CD4-positive, alpha-beta T cell (primary cell): ENCODE measurements at regions of chr2 and their contacts with region 1.

Region 1: GRCh38 chr2:85642725-85643124 is 25.3 kb downstream of the SFTPB start:
- DNase-seq: peak in 1 of 14 experiments; percentile 24
- ATAC-seq: no peak
- H3K4me3 ChIP-seq: no peak overlapping the region
- H3K4me3 Mint-ChIP-seq: no peak overlapping the region
- H3K27ac ChIP-seq: no peak overlapping the region
- H3K27ac Mint-ChIP-seq: peak overlapping the region; percentile 59
- H3K4me1 ChIP-seq: peaks cover 1% of the 10 kb centered on the region
- H3K4me1 Mint-ChIP-seq: peaks cover 6% of the 10 kb centered on the region
- H3K27me3 ChIP-seq: no peaks in the 10 kb centered on the region
- H3K27me3 Mint-ChIP-seq: no peaks in the 10 kb centered on the region
- CTCF ChIP-seq: no peak

Region 2: DNA sequence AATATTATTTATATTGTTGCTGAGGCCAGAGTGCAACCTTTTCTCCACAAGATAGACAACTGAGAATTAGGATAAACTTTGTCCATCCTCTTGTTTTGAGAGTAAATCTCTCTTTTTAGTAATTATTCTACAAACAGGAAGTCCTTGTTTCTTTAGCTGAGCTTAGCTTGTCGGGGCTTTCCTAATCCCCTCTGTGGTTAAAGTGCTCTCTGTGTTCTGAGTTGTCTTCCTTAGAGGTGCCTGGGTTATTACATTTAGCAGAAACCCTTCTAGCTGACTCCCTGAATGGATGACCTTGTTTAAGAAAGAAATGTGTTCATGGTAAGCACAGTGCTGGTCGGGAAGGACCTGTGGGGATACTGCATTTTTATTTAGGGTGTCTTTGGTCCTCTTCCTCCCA is 14.1 kb before region 1 on chr2:
- CTCF ChIA-PET with region 1: interaction called, 18 read pairs
- POLR2A ChIA-PET with region 1: interaction called, 3 read pairs
- intact Hi-C with region 1: no loop called
- DNase-seq: peak in 1 of 14 experiments; percentile 23
- ATAC-seq: no peak
- H3K4me3 ChIP-seq: no peak overlapping the region
- H3K4me3 Mint-ChIP-seq: no peak overlapping the region
- H3K27ac ChIP-seq: no peak overlapping the region
- H3K27ac Mint-ChIP-seq: no peak overlapping the region
- H3K4me1 ChIP-seq: peaks cover 4% of the 10 kb centered on the region
- H3K4me1 Mint-ChIP-seq: no peaks in the 10 kb centered on the region
- H3K27me3 ChIP-seq: no peaks in the 10 kb centered on the region
- H3K27me3 Mint-ChIP-seq: no peaks in the 10 kb centered on the region
- CTCF ChIP-seq: no peak

Region 3: GRCh38 chr2:85753525-85754312 is 111.0 kb after region 1 on chr2 and contains the start of gene ATOH8:
- CTCF ChIA-PET with region 1: no interaction called
- POLR2A ChIA-PET with region 1: no interaction called
- intact Hi-C with region 1: no loop called
- DNase-seq: peak in 4 of 14 experiments; percentile 8 to 38 (median 26)
- ATAC-seq: no peak
- H3K4me3 ChIP-seq: peak within 1 kb of the TSS; percentile 34
- H3K4me3 Mint-ChIP-seq: peak within 1 kb of the TSS; percentile 74
- H3K27ac ChIP-seq: no peak within 1 kb of the TSS
- H3K27ac Mint-ChIP-seq: no peak within 1 kb of the TSS
- H3K4me1 ChIP-seq: peaks cover 29% of the 10 kb centered on the region
- H3K4me1 Mint-ChIP-seq: peaks cover 27% of the 10 kb centered on the region
- H3K27me3 ChIP-seq: peaks cover 64 to 70% of the 10 kb centered on the region in 2 experiments
- H3K27me3 Mint-ChIP-seq: peaks cover 82% of the 10 kb centered on the region
- CTCF ChIP-seq: no peak
- total RNA-seq, gene ATOH8: not detected